ENCODE measurements at regions of chr7 and their contacts with region 1.

Region 1: DNA sequence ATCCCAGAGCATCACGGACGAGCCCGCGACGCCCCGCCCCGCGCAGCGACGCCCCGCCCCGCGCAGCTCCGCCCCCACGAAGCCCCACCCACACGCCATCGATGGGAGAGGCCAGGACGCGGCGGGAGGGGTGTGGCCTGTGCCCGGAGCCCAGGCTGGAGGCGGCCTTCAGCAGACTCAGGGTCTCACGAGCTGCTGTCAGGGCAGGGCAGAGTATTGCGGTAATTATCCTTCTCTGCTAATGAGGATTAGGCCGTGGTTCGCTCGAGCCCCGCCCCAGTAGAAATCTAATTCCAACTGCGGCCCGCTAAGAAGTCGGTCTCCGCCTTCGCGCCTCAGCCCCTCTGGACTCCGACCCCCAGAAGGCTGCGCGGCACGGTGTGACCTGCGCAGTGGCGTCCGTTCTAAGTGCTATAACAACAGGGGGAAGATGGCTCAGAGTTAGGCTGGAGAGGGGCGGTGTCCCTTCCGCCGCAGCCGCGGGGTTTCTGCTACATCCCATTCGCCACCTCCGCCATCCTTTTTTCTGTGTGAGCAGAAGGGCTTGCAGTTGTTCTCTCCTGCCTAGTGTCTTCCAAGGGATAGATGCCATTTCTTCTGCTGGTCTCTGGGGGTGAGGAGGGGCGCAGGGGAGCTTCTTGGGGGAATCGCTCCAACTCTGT is 337 bp upstream of the NT5C3A start:
- DNase-seq: peak; percentile 92
- H3K4me3 Mint-ChIP-seq: peak overlapping the region; percentile 78
- H3K27ac Mint-ChIP-seq: peak overlapping the region; percentile 78
- H3K4me1 Mint-ChIP-seq: peaks cover 38% of the 10 kb centered on the region
- H3K27me3 Mint-ChIP-seq: peaks cover 3% of the 10 kb centered on the region

Region 2: DNA sequence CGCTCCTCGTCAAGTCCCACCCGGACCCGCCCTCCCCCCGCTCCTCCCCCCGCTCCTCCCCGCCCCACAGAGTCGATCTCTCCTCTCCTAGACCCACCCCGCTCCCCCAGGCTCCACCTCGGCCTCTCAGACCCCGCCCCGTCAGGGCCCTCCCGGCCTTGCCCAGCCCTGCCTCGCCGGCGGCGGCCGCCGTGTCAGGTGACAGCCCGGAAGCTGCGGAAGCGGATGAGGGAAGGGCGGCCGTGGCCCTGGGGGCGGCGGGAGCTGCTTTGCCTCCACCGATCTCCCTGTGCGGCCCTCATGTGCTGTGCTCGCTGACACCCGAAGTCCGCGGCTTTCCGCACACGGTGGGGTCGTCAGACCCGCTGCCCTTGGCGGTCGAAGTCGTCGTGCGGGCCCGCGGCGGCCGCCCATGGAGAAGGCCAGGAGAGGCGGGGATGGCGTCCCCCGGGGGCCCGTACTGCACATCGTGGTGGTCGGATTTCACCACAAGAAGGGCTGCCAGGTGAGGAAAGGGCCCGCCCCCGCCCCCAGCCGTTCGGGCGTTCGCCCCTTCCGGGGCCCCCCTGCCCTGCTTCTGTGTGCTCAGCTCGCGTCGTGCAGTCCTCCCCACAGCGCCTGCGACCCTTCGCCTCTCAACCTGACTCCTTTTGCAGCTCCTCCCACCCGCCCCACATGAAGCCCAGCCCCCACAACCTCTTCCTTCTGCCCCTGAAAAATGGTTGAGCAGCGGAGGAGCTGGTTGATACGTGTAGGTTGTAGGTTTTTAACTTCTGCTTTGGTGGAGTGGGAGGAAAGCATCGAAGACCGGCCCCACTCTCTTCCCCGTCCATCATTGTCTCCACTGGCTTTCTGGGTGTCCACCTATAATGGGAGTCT is 567.4 kb before region 1 on chr7 and contains the start of gene AVL9:
- CTCF ChIA-PET with region 1: no interaction called
- POLR2A ChIA-PET with region 1: interaction called, 14 read pairs
- DNase-seq: peak; percentile 99
- H3K4me3 Mint-ChIP-seq: peak within 1 kb of the TSS; percentile 88
- H3K27ac Mint-ChIP-seq: peak within 1 kb of the TSS; percentile 96
- H3K4me1 Mint-ChIP-seq: peaks cover 45% of the 10 kb centered on the region
- H3K27me3 Mint-ChIP-seq: no peaks in the 10 kb centered on the region
- total RNA-seq, gene AVL9: 38.7 to 40.8 TPM

Region 3: GRCh38 chr7:33040803-33041516 is 22.0 kb before region 1 on chr7:
- CTCF ChIA-PET with region 1: interaction called, 10 read pairs
- POLR2A ChIA-PET with region 1: interaction called, 60 read pairs
- DNase-seq: peak; percentile 75
- H3K4me3 Mint-ChIP-seq: peak overlapping the region; percentile 83
- H3K27ac Mint-ChIP-seq: peak overlapping the region; percentile 81
- H3K4me1 Mint-ChIP-seq: peaks cover 45% of the 10 kb centered on the region
- H3K27me3 Mint-ChIP-seq: no peaks in the 10 kb centered on the region

Region 4: DNA sequence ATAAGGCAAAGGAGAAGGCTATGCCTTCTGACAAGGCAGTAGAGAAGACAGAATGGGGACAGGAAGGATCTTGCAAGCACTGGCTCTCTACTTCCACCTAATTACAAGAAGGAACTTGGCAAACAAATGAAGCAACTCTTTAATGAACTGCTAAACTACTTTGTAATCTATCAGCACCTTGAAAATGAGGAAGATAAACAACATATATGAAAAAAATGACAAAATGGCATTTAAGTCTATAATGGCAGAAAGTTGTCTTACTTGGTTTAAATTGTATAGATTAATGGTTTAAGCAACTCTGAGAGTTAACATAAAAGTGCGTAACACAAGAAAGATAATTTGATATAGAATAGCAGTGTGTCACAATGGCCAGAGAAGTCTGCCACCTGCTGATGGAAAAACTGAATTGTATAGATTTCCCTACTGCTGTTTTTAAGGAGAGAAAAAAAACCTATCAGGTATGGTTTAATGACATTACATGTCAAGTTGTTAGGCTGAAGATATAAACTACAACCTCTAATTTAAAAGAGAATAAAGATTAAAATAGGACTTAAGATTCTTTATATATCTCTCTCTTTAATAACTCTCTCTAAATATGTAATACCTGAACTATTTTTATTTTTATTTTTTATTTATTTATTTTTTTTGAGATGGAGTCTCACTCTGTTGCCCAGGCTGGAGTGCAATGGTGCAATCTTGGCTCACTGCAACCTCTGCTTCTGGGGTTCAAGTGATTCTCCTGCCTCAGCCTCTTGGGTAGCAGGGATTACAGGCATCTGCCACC is 12.2 kb before region 1 on chr7:
- CTCF ChIA-PET with region 1: interaction called, 8 read pairs
- POLR2A ChIA-PET with region 1: interaction called, 26 read pairs
- DNase-seq: no peak
- H3K4me3 Mint-ChIP-seq: no peak overlapping the region
- H3K27ac Mint-ChIP-seq: no peak overlapping the region
- H3K4me1 Mint-ChIP-seq: peaks cover 49% of the 10 kb centered on the region
- H3K27me3 Mint-ChIP-seq: no peaks in the 10 kb centered on the region

Measured in activated CD4-positive, alpha-beta memory T cell treated with anti-CD3 and anti-CD28 coated beads, Interleukin-2, amount 10 ng/mL, durations not matched to agents 7 days and 5 days (primary cell).